Dendritic cell treated with granulocyte-macrophage colony-stimulating factor and Interleukin-4, amounts not matched to agents 40 ng/mL and 50 ng/mL, for 4 days (primary cell): ENCODE measurements at regions of chr12 and their contacts with region 1.

Region 1: GRCh38 chr12:101323255-101323654 is 43.4 kb downstream of the UTP20 start:
- H3K4me3 Mint-ChIP-seq: no peak overlapping the region
- H3K27ac Mint-ChIP-seq: no peak overlapping the region
- H3K4me1 Mint-ChIP-seq: no peaks in the 10 kb centered on the region
- H3K27me3 Mint-ChIP-seq: no peaks in the 10 kb centered on the region

Region 2: GRCh38 chr12:100827901-100828520 is 495.2 kb before region 1 on chr12:
- intact Hi-C with region 1: loop called (anchors 10 kb)
- H3K4me3 Mint-ChIP-seq: no peak overlapping the region
- H3K27ac Mint-ChIP-seq: no peak overlapping the region
- H3K4me1 Mint-ChIP-seq: no peaks in the 10 kb centered on the region
- H3K27me3 Mint-ChIP-seq: no peaks in the 10 kb centered on the region

Region 3: DNA sequence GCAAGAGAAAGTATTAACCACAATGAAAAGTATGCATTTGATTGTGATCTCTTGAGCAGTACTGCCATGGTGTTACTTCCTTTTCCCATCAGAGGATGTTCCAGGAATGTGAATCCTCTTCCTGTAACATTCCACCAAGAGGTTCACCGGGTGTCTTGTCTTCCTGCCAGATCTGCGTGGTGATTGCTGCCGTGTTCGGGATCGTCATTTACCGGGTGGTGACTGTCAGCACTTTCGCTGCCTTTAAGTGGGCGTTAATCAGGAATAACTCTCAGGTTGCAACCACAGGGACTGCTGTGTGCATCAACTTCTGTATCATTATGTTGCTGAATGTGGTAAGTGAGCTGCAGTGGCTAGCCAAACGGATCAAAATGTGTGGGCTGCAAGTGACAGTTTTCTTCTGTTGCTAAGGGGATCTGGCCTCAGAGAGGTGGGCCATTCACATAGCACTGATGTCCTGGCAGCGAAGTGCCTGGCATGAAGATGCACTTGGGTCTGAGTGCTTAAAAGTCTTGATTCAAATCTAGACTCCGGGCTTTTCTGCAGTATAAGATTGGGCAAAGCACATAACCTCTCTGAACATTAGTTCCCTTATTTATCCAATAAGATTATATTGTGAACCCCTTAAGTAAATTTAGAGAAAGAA is 236.6 kb before region 1 on chr12:
- intact Hi-C with region 1: no loop called
- H3K4me3 Mint-ChIP-seq: no peak overlapping the region
- H3K27ac Mint-ChIP-seq: no peak overlapping the region
- H3K4me1 Mint-ChIP-seq: no peaks in the 10 kb centered on the region
- H3K27me3 Mint-ChIP-seq: no peaks in the 10 kb centered on the region

Region 4: GRCh38 chr12:101356794-101357193 is 33.5 kb after region 1 on chr12:
- intact Hi-C with region 1: no loop called
- H3K4me3 Mint-ChIP-seq: no peak overlapping the region
- H3K27ac Mint-ChIP-seq: peak overlapping the region; percentile 43
- H3K4me1 Mint-ChIP-seq: peaks cover 14% of the 10 kb centered on the region
- H3K27me3 Mint-ChIP-seq: no peaks in the 10 kb centered on the region